Left ventricle myocardium inferior (tissue), 1 donor: ENCODE measurements at regions of chr18 and their contacts with region 1.

Region 1: GRCh38 chr18:13003466-13003896 is 12.3 kb downstream of the CEP192 start:
- DNase-seq: no peak
- H3K4me3 ChIP-seq: no peak overlapping the region
- H3K27ac ChIP-seq: no peak overlapping the region
- H3K4me1 ChIP-seq: peaks cover 23% of the 10 kb centered on the region
- H3K27me3 ChIP-seq: no peaks in the 10 kb centered on the region
- CTCF ChIP-seq: peak; percentile 60

Region 2: GRCh38 chr18:12455496-12455895 is 548.0 kb before region 1 on chr18:
- intact Hi-C with region 1: no loop called
- DNase-seq: no peak
- H3K4me3 ChIP-seq: no peak overlapping the region
- H3K27ac ChIP-seq: no peak overlapping the region
- H3K4me1 ChIP-seq: peaks cover under 1% of the 10 kb centered on the region
- H3K27me3 ChIP-seq: no peaks in the 10 kb centered on the region
- CTCF ChIP-seq: no peak

Region 3: GRCh38 chr18:12990967-12991838 is 12.3 kb before region 1 on chr18 and contains the start of gene CEP192:
- intact Hi-C with region 1: loop called (anchors 2 kb)
- DNase-seq: peak; percentile 97
- H3K4me3 ChIP-seq: peak within 1 kb of the TSS; percentile 91
- H3K27ac ChIP-seq: peak within 1 kb of the TSS; percentile 94
- H3K4me1 ChIP-seq: peaks cover 39% of the 10 kb centered on the region
- H3K27me3 ChIP-seq: no peaks in the 10 kb centered on the region
- CTCF ChIP-seq: no peak
- total RNA-seq, gene CEP192: 25.6 TPM

Region 4: DNA sequence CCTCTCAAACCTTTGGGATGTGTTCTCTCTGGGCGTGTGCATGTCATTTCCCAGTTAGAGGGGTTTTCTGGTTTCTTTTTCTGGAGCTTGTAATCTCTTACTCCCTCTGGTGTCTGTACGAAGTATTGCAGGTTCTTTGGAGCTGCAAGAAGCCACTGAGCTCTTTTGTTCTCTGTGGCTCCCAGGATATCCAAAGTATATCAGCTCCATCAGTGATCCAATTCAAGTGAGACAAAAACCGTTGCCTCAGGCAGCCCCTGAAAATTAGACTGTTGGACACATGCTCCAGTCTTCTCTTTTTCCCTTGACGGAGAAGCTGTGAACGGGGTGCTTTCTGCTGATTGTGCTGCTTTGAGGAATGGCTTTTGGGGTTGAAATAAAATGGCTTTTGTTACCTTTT is 156.1 kb after region 1 on chr18:
- intact Hi-C with region 1: loop called (anchors 10 kb)
- DNase-seq: no peak
- H3K4me3 ChIP-seq: no peak overlapping the region
- H3K27ac ChIP-seq: no peak overlapping the region
- H3K4me1 ChIP-seq: no peaks in the 10 kb centered on the region
- H3K27me3 ChIP-seq: no peaks in the 10 kb centered on the region
- CTCF ChIP-seq: peak; percentile 88